ENCODE measurements at regions of chr7 and their contacts with region 1.

Region 1: DNA sequence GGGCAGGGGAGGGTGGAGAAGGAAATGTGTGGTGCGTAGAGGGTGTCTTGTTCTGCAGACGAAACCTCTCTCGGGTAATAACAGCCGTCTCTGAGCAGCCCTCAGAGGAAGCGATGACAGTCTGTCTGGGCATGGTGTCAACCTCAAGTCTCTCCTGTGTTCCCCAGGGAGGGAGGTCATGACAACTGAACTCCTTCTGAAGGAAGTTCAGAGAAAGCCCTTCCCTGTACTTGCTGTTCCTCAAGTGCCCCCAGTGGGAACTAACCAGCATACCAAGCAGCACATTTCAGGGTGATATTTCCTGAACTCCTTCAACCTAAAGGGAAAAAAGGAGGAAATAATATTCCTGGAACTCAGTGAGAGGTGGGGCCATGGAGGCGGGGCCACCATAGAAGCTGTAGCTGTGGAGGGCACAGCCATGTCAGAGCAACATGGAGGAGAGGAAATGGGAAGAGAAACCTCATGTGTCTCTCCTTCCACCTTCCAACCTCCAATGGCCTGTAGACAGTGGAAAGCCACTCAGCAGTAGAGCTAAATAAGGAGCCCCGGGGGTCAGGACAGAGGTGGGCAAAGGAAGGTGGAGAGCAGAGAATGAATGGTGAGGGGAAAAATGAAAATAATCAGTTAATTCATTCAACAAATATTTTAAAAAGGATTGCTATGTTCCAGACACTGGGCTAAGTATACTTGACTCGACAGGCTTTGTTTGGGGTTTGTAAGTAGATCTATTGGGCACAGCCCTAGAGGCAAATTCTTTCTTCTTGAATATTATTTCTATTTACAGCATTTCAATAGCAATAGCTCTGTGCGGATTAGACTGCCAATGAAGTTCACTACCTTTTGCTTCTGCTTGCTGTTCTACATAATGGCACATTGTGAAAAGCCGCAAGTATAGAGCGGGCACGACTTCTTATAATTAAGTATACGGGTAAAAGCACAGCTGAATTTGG is 61.0 kb upstream of the AOAH start:
- DNase-seq: peak; percentile 79 to 88 (median 84)
- H3K4me3 ChIP-seq: no peak overlapping the region
- H3K4me3 Mint-ChIP-seq: peak overlapping the region in 7 of 8 donors; percentile 43 to 89 (median 70)
- H3K27ac ChIP-seq: peak overlapping the region; percentile 36
- H3K27ac Mint-ChIP-seq: peak overlapping the region; percentile 88 to 100 (median 99)
- H3K4me1 ChIP-seq: peaks cover 93% of the 10 kb centered on the region
- H3K4me1 Mint-ChIP-seq: peaks cover 61 to 81% (median 70%) of the 10 kb centered on the region in 4 donors
- H3K27me3 ChIP-seq: no peaks in the 10 kb centered on the region
- H3K27me3 Mint-ChIP-seq: no peaks in the 10 kb centered on the region

Region 2: GRCh38 chr7:36677769-36678437 is 107.4 kb before region 1 on chr7:
- CTCF ChIA-PET with region 1: interaction called, 3 read pairs
- POLR2A ChIA-PET with region 1: interaction called, 7 read pairs
- intact Hi-C with region 1: loop called (anchors 5 kb)
- DNase-seq: peak in 2 of 5 donors; percentile 10 to 11
- H3K4me3 ChIP-seq: no peak overlapping the region
- H3K4me3 Mint-ChIP-seq: peak overlapping the region in 7 of 8 donors; percentile 55 to 84 (median 68)
- H3K27ac ChIP-seq: no peak overlapping the region
- H3K27ac Mint-ChIP-seq: peak overlapping the region; percentile 79 to 96 (median 89)
- H3K4me1 ChIP-seq: peaks cover 16% of the 10 kb centered on the region
- H3K4me1 Mint-ChIP-seq: peaks cover 18 to 39% (median 28%) of the 10 kb centered on the region in 4 donors
- H3K27me3 ChIP-seq: no peaks in the 10 kb centered on the region
- H3K27me3 Mint-ChIP-seq: no peaks in the 10 kb centered on the region

Region 3: DNA sequence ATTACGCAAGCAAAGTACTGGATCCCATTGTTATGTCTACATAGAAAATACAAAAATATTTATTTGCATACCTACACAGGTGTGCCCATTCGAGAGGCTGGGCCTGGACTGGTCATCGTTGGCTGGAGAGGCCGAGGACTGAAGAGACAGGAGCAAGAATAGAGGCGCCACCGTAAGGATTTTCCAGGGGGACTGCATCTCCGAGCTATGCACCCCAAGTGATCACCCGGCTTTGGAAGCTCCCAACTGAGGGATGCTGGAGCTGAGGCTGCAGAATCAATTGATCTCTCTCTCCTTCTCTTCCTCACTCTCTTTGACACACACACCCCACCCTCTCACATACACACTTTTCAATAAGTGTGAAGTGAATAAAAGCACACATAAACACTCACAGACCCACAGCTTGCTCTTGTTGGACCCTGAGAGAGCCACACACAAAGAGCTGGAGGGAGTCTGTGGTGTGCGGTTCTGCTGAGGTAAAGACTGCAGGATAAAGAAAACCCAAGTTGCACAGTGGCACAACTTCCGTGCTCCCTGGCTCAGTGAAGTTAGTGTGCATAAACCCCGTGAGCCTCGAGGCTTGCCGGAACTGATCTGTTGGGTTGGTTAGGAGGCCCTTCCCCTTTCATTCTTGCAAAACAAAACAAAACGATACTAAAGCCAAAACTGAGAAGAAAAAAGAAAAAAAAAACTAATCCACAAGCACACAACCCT is 61.2 kb before region 1 on chr7 and contains the start of gene AOAH:
- CTCF ChIA-PET with region 1: interaction called, 3 read pairs
- POLR2A ChIA-PET with region 1: interaction called, 6 read pairs
- intact Hi-C with region 1: loop called (anchors 2 kb)
- DNase-seq: peak; percentile 81 to 87 (median 82)
- H3K4me3 ChIP-seq: peak within 1 kb of the TSS in 1 of 2 donors; percentile 34
- H3K4me3 Mint-ChIP-seq: peak within 1 kb of the TSS; percentile 57 to 91 (median 83)
- H3K27ac ChIP-seq: peak within 1 kb of the TSS; percentile 37
- H3K27ac Mint-ChIP-seq: peak within 1 kb of the TSS; percentile 78 to 95 (median 91)
- H3K4me1 ChIP-seq: peaks cover 72% of the 10 kb centered on the region
- H3K4me1 Mint-ChIP-seq: peaks cover 54 to 83% (median 67%) of the 10 kb centered on the region in 4 donors
- H3K27me3 ChIP-seq: no peaks in the 10 kb centered on the region
- H3K27me3 Mint-ChIP-seq: no peaks in the 10 kb centered on the region
- total RNA-seq, gene AOAH: 4.5 to 5.4 TPM

Region 4: GRCh38 chr7:36765605-36766004 is 19.7 kb before region 1 on chr7:
- CTCF ChIA-PET with region 1: no interaction called
- POLR2A ChIA-PET with region 1: no interaction called
- intact Hi-C with region 1: no loop called
- DNase-seq: no peak
- H3K4me3 ChIP-seq: no peak overlapping the region
- H3K4me3 Mint-ChIP-seq: no peak overlapping the region
- H3K27ac ChIP-seq: no peak overlapping the region
- H3K27ac Mint-ChIP-seq: peak overlapping the region in 3 of 7 donors; percentile 47 to 66 (median 49)
- H3K4me1 ChIP-seq: no peaks in the 10 kb centered on the region
- H3K4me1 Mint-ChIP-seq: peaks cover 4 to 8% (median 6%) of the 10 kb centered on the region in 4 donors
- H3K27me3 ChIP-seq: no peaks in the 10 kb centered on the region
- H3K27me3 Mint-ChIP-seq: no peaks in the 10 kb centered on the region

Region 5: GRCh38 chr7:36967387-36967786 is 182.1 kb after region 1 on chr7:
- CTCF ChIA-PET with region 1: no interaction called
- POLR2A ChIA-PET with region 1: no interaction called
- intact Hi-C with region 1: no loop called
- DNase-seq: no peak
- H3K4me3 ChIP-seq: no peak overlapping the region
- H3K4me3 Mint-ChIP-seq: peak overlapping the region in 1 of 8 donors; percentile 22
- H3K27ac ChIP-seq: no peak overlapping the region
- H3K27ac Mint-ChIP-seq: peak overlapping the region in 1 of 7 donors; percentile 20
- H3K4me1 ChIP-seq: peaks cover 39% of the 10 kb centered on the region
- H3K4me1 Mint-ChIP-seq: peaks cover 42 to 65% (median 50%) of the 10 kb centered on the region in 4 donors
- H3K27me3 ChIP-seq: no peaks in the 10 kb centered on the region
- H3K27me3 Mint-ChIP-seq: no peaks in the 10 kb centered on the region